AG04449 (cell line): ENCODE measurements at regions of chr7 and their contacts with region 1.

Region 1: DNA sequence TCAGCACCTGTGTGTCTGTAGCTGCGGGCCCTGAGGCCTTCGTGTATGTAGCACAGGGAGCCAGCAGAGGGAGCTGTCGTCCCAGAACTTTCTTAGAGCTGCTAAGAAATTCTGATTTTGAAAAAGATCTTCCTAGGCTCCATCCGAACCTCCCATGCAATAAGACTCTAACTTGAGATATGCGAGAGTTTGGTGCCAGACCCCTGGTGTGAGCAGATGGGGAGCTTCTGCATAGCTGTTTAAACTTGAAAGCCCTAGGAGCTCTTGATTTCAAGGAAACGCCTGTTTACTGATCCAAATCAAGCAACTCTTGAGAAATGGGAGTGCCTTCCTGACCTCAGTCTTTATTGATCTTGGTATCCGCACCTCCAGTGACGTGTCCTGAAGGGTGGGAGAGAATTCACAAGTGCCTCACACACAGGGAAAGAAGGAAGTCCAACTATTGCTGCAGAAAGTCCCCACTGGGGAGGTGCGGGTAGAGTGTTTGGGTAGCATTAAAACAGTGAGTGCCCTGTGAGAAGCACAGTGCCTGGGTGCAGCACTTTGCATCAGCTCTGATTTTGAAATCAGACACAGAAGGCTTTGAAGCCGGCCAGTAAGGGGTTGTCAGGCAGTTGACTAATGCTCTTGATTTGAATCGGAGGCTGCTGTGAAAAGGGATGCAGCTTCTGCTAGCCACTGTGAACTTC is 66.4 kb upstream of the STRIP2 start:
- DNase-seq: no peak
- H3K4me3 ChIP-seq: no peak overlapping the region
- CTCF ChIP-seq: peak; percentile 85

Region 2: DNA sequence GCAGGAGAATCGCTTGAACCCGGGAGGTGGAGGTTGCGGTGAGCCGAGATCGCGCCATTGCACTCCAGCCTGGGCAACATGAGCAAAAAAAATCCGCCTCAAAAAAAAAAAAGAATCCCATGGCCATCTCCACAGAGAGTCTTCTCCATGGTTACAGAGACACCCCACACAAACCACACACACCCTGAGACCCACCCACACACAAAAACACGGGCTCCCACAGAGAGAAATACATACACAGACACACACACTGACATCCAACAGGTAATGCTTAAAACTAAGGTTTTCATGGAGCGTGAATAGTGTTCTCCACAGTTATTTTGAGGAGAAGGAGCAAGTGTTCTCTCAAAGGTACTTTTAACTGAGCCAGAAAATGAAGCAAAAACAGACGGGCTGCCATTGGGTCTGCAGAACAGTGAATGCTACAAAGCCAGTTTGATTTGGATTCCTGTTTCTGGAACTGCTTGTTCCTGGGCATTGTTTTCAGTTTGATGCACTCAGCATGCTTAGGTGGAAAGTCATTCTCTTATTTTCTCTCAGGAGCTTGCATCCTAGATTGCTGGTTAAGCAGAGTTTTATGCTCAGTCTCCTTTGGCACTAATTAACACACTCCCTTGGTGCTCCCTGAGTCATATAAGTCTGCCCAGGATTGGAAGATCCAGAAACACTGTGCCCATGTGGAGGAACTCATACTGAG is 127.6 kb before region 1 on chr7:
- CTCF ChIA-PET with region 1: no interaction called
- POLR2A ChIA-PET with region 1: no interaction called
- DNase-seq: no peak
- H3K4me3 ChIP-seq: no peak overlapping the region
- CTCF ChIP-seq: no peak

Region 3: DNA sequence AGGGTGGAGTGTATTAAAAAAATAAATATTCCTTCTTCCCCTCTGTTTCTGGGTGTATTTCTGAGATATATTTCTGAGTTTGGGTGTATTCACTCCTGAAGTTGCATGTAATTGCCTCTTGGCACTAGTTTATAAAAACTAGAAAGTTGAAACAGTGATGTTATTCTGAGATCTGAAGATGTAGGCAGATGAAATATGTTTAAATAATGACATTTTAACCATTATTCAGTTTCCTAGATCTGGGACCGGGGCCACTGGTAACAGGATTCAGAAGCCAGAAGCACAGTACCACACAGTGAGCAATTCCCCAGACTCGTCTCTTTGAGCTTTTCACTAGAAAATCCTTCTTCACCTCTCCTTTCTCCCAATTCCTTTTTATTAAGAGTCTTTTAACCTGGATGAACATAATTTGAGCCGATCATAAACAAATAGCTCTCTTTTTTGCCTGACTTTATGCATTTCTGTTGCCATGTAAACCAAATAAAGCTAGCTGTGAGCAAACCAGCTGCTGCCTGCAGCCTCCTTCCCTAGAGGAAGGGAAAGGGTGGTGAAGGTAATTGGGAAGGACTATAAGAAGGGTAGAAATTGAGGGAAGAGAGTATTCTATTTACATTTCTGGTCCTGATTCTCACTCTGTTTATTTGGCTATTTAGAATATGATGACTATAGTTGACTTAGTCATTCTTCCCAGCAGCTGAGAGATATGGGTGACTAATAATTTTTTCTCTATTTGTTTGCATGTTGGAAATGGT is 35.4 kb before region 1 on chr7:
- CTCF ChIA-PET with region 1: interaction called, 12 read pairs
- POLR2A ChIA-PET with region 1: no interaction called
- DNase-seq: no peak
- H3K4me3 ChIP-seq: no peak overlapping the region
- CTCF ChIP-seq: no peak

Region 4: DNA sequence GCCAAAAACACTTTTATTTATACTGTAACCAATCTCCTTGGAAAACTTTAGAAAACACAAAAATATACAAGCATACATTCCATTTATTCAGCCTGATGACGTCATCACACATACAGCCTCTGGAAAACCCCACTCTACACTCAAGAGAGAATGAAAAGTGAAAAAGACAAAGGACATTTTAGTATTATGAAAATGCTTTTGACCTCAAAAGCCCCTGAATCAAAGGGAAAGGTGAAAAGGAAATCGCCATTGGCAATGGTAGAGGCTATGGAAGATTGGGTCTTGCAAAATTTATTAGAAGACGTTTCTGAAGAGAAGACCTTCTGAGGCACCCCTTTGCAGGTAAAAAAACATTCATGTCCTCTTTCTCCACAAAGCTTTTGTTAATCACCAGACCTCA is 16.5 kb before region 1 on chr7:
- CTCF ChIA-PET with region 1: interaction called, 101 read pairs
- POLR2A ChIA-PET with region 1: no interaction called
- DNase-seq: no peak
- H3K4me3 ChIP-seq: no peak overlapping the region
- CTCF ChIP-seq: no peak

Region 5: DNA sequence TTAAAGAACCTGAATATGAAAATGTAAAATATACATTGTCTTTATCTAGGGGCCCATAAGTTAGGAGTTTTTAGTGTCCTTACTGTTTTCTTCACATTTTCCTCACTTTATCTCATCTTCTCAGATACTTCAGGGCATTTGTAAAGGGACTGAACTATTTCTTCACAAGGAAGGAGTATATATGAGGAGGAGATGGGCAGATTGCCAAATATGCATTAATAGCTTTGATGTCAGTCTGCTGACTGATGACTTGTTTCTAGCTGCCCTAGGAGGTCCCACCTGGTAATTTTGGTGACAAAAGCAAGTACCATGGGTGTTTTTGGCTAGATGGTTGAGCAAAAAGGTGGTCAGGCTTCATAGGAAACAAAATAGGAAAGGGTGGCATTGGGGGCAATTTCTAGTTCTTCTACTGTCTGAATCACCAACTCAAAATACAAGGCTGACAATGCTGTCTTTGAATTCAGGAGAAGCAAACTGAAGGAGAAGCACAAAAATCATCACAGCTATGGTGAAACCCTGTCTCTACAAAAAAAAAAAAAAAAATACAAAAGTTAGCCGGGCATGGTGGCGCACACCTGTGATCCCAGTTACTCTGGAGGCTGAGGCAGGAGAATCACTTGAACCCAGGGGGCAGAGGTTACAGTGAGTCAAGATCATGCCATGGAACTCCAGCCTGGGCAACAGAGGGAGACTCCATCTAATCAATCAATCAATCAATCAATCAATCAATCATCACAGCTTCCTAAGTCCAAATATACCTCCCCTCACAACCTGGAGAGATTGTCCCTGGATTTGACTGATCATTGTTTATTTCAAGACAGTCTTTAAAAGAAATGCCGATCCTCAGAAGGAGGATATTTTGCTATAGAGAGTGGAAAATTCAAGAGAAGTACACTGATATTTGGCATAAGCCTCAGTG is 56.1 kb after region 1 on chr7:
- CTCF ChIA-PET with region 1: interaction called, 18 read pairs
- POLR2A ChIA-PET with region 1: no interaction called
- DNase-seq: no peak
- H3K4me3 ChIP-seq: no peak overlapping the region
- CTCF ChIP-seq: no peak

Region 6: GRCh38 chr7:129480674-129481365 is 113.0 kb after region 1 on chr7:
- CTCF ChIA-PET with region 1: interaction called, 10 read pairs
- POLR2A ChIA-PET with region 1: no interaction called
- DNase-seq: no peak
- H3K4me3 ChIP-seq: no peak overlapping the region
- CTCF ChIP-seq: no peak

Region 7: GRCh38 chr7:129644634-129645230 is 276.9 kb after region 1 on chr7:
- CTCF ChIA-PET with region 1: interaction called, 74 read pairs
- POLR2A ChIA-PET with region 1: no interaction called
- DNase-seq: no peak
- H3K4me3 ChIP-seq: no peak overlapping the region
- CTCF ChIP-seq: peak; percentile 14